K562 (cell line): ENCODE measurements at regions of chr17 and their contacts with region 1.

Region 1: GRCh38 chr17:73429440-73430164 is 117.8 kb upstream of the CDC42EP4 start:
- DNase-seq: peak; percentile 82 to 91 (median 88)
- ATAC-seq: peak; percentile 98
- H3K4me3 ChIP-seq: no peak overlapping the region
- H3K27ac ChIP-seq: no peak overlapping the region
- H3K4me1 ChIP-seq: no peaks in the 10 kb centered on the region
- H3K27me3 ChIP-seq: peaks cover 9 to 33% of the 10 kb centered on the region in 2 experiments; a peak in 4 of 5 replicates
- CTCF ChIP-seq: peak; percentile 89 to 95 (median 94)
- EP300 ChIP-seq: no peak
- POLR2A ChIP-seq: no peak
- RAD21 ChIP-seq: peak; percentile 91 to 97

Region 2: GRCh38 chr17:73546770-73547536 is 117.4 kb after region 1 on chr17:
- CTCF ChIA-PET with region 1: no interaction called
- POLR2A ChIA-PET with region 1: no interaction called
- in situ Hi-C with region 1: no loop called
- intact Hi-C with region 1: loop called (anchors 10 kb)
- DNase-seq: peak; percentile 64 to 69 (median 66)
- ATAC-seq: peak; percentile 96
- H3K4me3 ChIP-seq: no peak overlapping the region
- H3K27ac ChIP-seq: no peak overlapping the region
- H3K4me1 ChIP-seq: no peaks in the 10 kb centered on the region; a peak in 1 of 5 replicates
- H3K27me3 ChIP-seq: peaks cover 3 to 62% of the 10 kb centered on the region in 2 experiments; a peak in 4 of 5 replicates
- CTCF ChIP-seq: no peak
- EP300 ChIP-seq: no peak
- POLR2A ChIP-seq: no peak
- RAD21 ChIP-seq: no peak

Region 3: DNA sequence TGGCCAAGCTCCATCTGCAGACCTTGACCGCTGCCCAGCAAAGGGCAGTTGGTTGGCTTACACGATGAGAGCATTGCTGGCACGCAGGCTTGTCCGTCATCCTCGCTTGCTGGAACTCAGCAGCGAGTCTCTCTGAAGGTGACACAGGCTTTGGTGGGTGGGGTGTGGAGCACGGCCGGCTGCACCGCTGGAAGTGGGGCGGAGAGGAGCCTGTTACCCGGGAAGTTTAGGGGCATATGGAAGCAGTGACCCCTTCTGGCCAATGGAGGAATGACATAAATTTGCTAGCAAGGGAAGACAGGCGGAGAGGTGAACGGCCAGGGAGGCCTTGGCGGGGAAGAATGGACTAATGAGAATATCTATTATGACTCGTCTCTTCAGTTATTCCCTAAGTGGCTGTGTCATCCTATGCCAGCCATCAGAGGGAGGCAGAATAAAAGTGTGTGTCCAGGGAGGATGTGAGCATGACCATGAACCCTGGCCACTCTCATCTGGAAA is 280.5 kb after region 1 on chr17:
- CTCF ChIA-PET with region 1: interaction called, 30 read pairs
- POLR2A ChIA-PET with region 1: interaction called, 6 read pairs
- in situ Hi-C with region 1: loop called (anchors 10 kb)
- intact Hi-C with region 1: loop called (anchors 1 kb)
- DNase-seq: peak; percentile 70 to 84 (median 76)
- ATAC-seq: peak; percentile 87
- H3K4me3 ChIP-seq: no peak overlapping the region
- H3K27ac ChIP-seq: no peak overlapping the region
- H3K4me1 ChIP-seq: no peaks in the 10 kb centered on the region
- H3K27me3 ChIP-seq: peaks cover 0 to 26% of the 10 kb centered on the region in 2 experiments; a peak in 2 of 5 replicates
- CTCF ChIP-seq: peak; percentile 75 to 88 (median 83)
- EP300 ChIP-seq: no peak
- POLR2A ChIP-seq: no peak
- RAD21 ChIP-seq: peak; percentile 79

Region 4: GRCh38 chr17:73782641-73783381 is 353.2 kb after region 1 on chr17:
- CTCF ChIA-PET with region 1: no interaction called
- POLR2A ChIA-PET with region 1: no interaction called
- in situ Hi-C with region 1: no loop called
- intact Hi-C with region 1: loop called (anchors 10 kb)
- DNase-seq: peak; percentile 30 to 50 (median 42)
- ATAC-seq: peak; percentile 90
- H3K4me3 ChIP-seq: no peak overlapping the region
- H3K27ac ChIP-seq: no peak overlapping the region
- H3K4me1 ChIP-seq: no peaks in the 10 kb centered on the region
- H3K27me3 ChIP-seq: peaks cover 0 to 27% of the 10 kb centered on the region in 2 experiments; a peak in 2 of 5 replicates
- CTCF ChIP-seq: peak; percentile 62 to 69 (median 69)
- EP300 ChIP-seq: no peak
- POLR2A ChIP-seq: no peak
- RAD21 ChIP-seq: peak in 1 of 2 experiments; percentile 51; a peak in 2 of 4 replicates

Region 5: DNA sequence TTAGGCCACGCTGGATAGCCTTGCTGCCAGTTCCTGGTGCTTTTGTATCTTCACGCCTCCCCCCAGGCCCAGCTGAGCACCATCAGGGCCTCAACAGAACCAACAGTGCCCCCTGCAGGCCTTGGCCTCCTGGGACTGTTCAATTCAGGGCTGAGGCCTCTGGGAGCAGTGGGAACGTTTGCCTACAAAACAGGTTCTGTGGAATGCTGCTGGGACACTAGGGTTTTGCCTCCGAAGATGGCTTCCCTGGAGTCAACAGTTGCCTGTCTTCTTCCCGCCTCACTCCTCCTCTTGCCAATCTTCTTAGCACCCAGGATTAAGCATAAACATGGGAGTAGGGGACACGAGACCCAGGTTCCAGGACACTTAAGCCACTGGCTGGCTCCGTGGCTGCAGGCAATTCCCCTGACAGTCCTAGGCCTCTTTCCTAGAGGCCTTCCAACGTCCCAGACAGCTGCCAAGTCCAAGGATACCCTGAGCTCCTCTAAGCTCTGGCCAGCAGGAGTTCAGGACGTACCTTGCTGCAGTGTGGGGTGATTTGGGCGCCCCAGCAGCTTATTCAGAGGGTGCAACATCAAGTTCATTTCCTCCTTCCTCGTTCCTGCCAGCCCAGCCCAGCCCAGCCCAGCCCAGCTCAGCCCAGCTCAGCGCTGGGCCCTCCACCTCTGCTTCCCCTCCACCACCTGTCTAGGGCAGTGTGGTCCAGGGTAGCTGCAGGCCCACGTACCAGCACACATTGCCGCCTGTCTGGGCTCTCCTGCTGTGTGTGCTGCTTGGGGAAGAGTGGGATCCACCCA is 527.3 kb after region 1 on chr17:
- CTCF ChIA-PET with region 1: no interaction called
- POLR2A ChIA-PET with region 1: no interaction called
- in situ Hi-C with region 1: no loop called
- intact Hi-C with region 1: loop called (anchors 2 kb)
- DNase-seq: peak; percentile 64 to 75 (median 66)
- ATAC-seq: peak; percentile 94
- H3K4me3 ChIP-seq: no peak overlapping the region
- H3K27ac ChIP-seq: no peak overlapping the region
- H3K4me1 ChIP-seq: peaks cover 0 to 11% of the 10 kb centered on the region in 2 experiments; a peak in 1 of 5 replicates
- H3K27me3 ChIP-seq: peaks cover 0 to 6% of the 10 kb centered on the region in 2 experiments; a peak in 2 of 5 replicates
- CTCF ChIP-seq: peak; percentile 69 to 79 (median 71)
- EP300 ChIP-seq: no peak
- POLR2A ChIP-seq: no peak
- RAD21 ChIP-seq: peak; percentile 30 to 72

Region 6: GRCh38 chr17:74176546-74177001 is 747.0 kb after region 1 on chr17:
- CTCF ChIA-PET with region 1: interaction called, 4 read pairs
- POLR2A ChIA-PET with region 1: no interaction called
- in situ Hi-C with region 1: loop called (anchors 10 kb)
- intact Hi-C with region 1: loop called (anchors 5 kb)
- DNase-seq: peak; percentile 68 to 72 (median 72)
- ATAC-seq: peak; percentile 97
- H3K4me3 ChIP-seq: no peak overlapping the region
- H3K27ac ChIP-seq: no peak overlapping the region
- H3K4me1 ChIP-seq: no peaks in the 10 kb centered on the region
- H3K27me3 ChIP-seq: peaks cover 4 to 34% of the 10 kb centered on the region in 2 experiments; a peak in 3 of 5 replicates
- CTCF ChIP-seq: peak; percentile 84 to 91 (median 89)
- EP300 ChIP-seq: no peak
- POLR2A ChIP-seq: no peak
- RAD21 ChIP-seq: peak; percentile 88 to 96